HAP-1 (cell line): ENCODE measurements at regions of chr2 and their contacts with region 1.

Region 1: GRCh38 chr2:230847883-230848388 is 16.8 kb upstream of the ITM2C start:
- DNase-seq: peak; percentile 83 to 97
- H3K4me3 ChIP-seq: no peak overlapping the region
- H3K4me1 ChIP-seq: peaks cover 16% of the 10 kb centered on the region
- H3K27me3 ChIP-seq: no peaks in the 10 kb centered on the region

Region 2: DNA sequence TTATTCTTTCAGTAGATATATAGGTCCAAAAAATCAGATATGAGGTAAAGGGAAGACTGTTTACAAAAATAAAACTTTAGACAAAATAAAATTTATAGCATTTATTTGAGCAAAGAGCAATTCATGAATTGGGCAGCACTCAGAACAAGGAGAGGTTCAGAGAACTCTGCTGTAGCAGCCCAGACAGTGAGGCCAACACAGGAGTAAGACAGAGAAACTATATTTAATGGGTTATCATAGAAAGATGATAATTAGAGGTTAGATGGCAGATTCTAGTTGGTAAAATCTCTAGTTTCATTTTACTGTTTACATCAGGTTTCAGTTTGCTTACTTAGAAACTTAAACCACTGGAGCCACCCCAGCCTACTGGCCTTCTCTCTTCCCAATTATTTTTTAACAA is 551.0 kb before region 1 on chr2:
- in situ Hi-C with region 1: no loop called
- DNase-seq: no peak
- H3K4me3 ChIP-seq: no peak overlapping the region
- H3K4me1 ChIP-seq: no peaks in the 10 kb centered on the region
- H3K27me3 ChIP-seq: no peaks in the 10 kb centered on the region

Region 3: GRCh38 chr2:230691005-230691647 is 156.8 kb before region 1 on chr2:
- in situ Hi-C with region 1: no loop called
- DNase-seq: no peak
- H3K4me3 ChIP-seq: no peak overlapping the region
- H3K4me1 ChIP-seq: no peaks in the 10 kb centered on the region
- H3K27me3 ChIP-seq: no peaks in the 10 kb centered on the region

Region 4: DNA sequence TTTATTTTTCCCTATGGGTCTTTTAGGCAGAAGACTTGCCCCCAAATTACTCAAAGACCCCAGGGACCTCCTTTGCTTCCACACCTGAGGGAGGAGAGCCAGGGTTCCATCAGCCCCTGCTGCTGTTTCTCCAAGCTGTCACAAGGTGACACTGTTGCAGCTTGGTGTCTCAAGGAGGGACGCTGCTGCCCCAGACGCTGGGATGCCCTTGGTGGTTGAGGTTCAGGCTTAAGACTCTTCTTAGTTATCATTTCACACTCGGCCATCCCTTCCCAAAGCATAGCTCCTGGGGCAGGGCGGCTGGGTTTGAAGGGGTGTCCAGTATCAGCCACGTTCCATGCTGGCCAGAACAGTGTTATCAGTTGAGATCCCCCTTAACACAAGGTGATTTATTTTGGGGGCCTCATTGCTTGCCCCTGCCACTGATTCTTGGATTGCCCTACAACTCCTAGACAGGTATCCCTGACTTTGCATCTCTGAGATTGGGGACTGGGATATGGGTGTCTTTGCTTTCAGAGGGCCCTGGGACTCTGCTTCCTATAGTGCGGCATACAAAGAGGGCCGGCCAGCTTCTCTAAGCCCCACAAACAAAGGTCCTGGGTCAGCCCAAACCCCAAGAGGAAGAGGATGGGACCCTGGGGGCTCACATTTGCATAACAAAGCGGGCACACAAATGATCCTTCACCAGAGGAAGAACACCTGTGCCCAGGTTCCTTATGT is 54.4 kb after region 1 on chr2:
- in situ Hi-C with region 1: no loop called
- DNase-seq: peak; percentile 41 to 80
- H3K4me3 ChIP-seq: no peak overlapping the region
- H3K4me1 ChIP-seq: no peaks in the 10 kb centered on the region
- H3K27me3 ChIP-seq: 0 out of 2 replicates have a peak, but pooled peaks cover 3% of the 10 kb centered on the region

Region 5: DNA sequence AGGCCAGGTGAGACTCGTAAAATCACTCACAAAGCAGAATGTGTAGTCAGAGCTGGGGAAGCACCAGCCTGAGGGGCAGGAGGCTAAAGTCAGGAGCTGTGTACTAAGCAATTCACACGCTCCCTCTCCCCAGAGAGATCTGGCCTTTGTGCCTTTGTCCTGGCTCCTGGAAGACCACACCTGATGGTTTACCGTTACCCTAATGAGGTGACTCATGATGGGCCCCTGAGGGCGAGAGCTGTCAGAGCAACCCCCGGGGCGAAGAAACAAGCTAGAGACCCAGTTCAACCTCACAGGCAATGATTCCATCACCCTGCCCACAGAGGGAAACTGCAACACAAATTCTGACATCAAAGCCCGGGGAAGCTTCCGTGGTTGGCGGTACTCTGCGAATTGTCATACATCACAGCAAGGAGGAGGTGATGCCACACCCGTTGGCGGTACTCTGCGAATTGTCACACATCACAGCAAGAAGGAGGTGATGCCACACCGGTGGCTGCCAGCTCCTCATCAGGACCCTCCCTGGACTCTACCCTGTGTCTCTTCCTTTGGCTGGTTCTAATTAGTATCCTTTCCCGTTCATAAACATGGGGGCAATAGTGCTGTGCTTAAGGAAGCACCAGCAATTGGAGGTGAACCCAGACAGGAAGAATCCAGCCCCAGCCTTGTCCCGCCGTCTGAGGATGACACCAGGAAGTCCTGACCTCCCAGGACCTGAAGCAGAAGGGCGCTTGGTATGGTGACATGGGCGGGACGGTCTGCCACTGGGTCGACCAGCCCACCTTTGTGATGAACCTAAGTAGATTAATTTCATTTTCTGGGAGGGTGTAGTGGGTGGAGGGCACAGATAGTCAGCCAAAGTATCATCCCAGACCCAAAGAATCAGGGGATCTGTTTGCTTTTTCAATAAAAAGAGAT is 578.1 kb after region 1 on chr2:
- in situ Hi-C with region 1: loop called (anchors 25 kb)
- DNase-seq: peak in 1 of 2 experiments; percentile 27
- H3K4me3 ChIP-seq: no peak overlapping the region
- H3K4me1 ChIP-seq: peaks cover 6% of the 10 kb centered on the region
- H3K27me3 ChIP-seq: no peaks in the 10 kb centered on the region